Activated naive CD4-positive, alpha-beta T cell treated with anti-CD3 and anti-CD28 coated beads for 36 hours (primary cell): ENCODE measurements at regions of chr2 and their contacts with region 1.

Region 1: GRCh38 chr2:147663153-147663961 is 181.5 kb upstream of the ACVR2A start:
- DNase-seq: peak; percentile 14
- H3K4me3 Mint-ChIP-seq: peak overlapping the region; percentile 26
- H3K27ac Mint-ChIP-seq: peak overlapping the region; percentile 84
- H3K4me1 Mint-ChIP-seq: peaks cover 24% of the 10 kb centered on the region
- H3K27me3 Mint-ChIP-seq: no peaks in the 10 kb centered on the region

Region 2: DNA sequence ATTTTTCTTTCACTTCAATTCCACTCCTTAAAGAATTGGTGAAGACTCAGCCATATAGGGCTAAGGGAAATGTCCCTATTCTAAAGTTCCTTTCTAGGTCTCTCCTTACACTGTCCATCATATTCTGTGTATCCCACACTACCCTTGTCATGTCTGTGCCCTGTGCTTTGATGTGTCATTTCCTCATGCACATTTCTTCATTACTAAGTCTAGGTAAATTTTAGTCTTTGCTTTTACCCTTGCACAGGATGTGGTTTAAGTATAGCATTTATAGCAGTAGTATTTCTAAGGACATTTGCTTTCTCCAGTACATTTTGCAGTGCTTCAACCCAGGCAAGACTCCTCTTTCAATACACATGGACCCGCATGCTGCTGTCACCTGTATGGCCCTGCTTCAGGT is 40.0 kb before region 1 on chr2:
- CTCF ChIA-PET with region 1: no interaction called
- intact Hi-C with region 1: loop called (anchors 1 kb)
- DNase-seq: peak; percentile 44
- H3K4me3 Mint-ChIP-seq: no peak overlapping the region
- H3K27ac Mint-ChIP-seq: peak overlapping the region; percentile 79
- H3K4me1 Mint-ChIP-seq: peaks cover 43% of the 10 kb centered on the region
- H3K27me3 Mint-ChIP-seq: no peaks in the 10 kb centered on the region

Region 3: GRCh38 chr2:147630585-147630984 is 32.8 kb before region 1 on chr2:
- CTCF ChIA-PET with region 1: no interaction called
- intact Hi-C with region 1: loop called (anchors 1 kb)
- DNase-seq: peak; percentile 50
- H3K4me3 Mint-ChIP-seq: no peak overlapping the region
- H3K27ac Mint-ChIP-seq: peak overlapping the region; percentile 80
- H3K4me1 Mint-ChIP-seq: peaks cover 22% of the 10 kb centered on the region
- H3K27me3 Mint-ChIP-seq: no peaks in the 10 kb centered on the region

Region 4: GRCh38 chr2:147789720-147790119 is 126.4 kb after region 1 on chr2:
- CTCF ChIA-PET with region 1: no interaction called
- intact Hi-C with region 1: no loop called
- DNase-seq: no peak
- H3K4me3 Mint-ChIP-seq: no peak overlapping the region
- H3K27ac Mint-ChIP-seq: no peak overlapping the region
- H3K4me1 Mint-ChIP-seq: no peaks in the 10 kb centered on the region
- H3K27me3 Mint-ChIP-seq: no peaks in the 10 kb centered on the region

Region 5: DNA sequence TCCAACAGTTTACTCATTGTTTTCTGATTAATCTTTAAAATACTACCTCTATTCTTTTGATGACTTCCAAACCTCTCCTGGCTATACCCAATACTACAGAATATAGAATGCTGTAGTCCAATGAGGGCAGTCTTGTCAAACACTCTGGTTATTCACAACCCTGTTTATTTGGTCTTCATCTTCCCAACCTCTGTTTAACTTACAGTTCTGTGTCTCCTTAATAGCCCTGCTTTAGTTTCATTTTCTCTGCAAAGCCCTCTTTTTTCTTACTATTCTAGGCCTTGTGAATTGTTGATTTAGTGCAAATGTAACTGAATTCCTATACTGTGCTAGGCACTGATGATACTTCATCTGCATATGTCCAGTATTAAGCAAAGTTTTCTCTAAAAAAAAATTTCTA is 221.5 kb after region 1 on chr2:
- CTCF ChIA-PET with region 1: no interaction called
- intact Hi-C with region 1: loop called (anchors 1 kb)
- DNase-seq: no peak
- H3K4me3 Mint-ChIP-seq: no peak overlapping the region
- H3K27ac Mint-ChIP-seq: no peak overlapping the region
- H3K4me1 Mint-ChIP-seq: peaks cover 43% of the 10 kb centered on the region
- H3K27me3 Mint-ChIP-seq: no peaks in the 10 kb centered on the region